ENCODE measurements at regions of chr15 and their contacts with region 1.

Region 1: DNA sequence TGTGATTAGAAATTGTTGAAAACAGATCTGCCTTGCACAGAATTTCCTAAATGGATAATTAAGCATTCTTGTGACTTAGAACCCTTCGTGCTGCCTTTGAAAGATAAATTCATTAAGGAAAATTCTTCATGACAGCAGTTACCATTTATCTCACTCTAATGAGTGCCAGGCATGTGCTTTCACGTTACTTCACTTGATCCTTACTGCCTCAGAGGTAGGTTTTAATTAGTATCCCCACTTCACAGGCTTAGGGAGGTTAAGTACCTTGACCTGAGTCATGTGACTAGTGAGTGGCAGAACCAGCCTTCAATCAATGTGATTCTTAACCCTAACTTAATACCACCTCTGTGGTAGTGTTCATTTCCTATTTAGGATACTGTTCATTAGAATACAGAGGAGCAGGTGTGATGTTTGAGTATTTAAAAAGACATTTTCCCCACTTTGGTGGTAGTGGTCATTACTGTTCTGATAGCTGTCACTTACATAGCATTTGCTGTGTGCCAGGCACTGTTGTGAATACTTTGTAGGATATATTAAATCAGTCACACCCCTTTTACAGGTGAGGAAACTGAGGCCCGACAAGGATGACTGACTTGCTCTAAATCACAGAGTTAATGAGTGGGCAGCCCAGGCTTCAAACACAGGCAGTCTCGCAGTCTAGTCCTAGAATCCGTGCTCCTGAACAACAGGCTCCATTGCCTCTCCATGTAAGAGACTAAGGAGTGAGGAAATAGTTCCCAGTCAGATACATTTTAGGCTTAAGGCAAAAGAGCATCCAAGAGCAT is 57.9 kb downstream of the RLBP1 start:
- DNase-seq: no peak
- H3K4me3 ChIP-seq: no peak overlapping the region
- H3K27ac ChIP-seq: no peak overlapping the region
- H3K4me1 ChIP-seq: peaks cover 17 to 22% (median 20%) of the 10 kb centered on the region in 4 experiments
- H3K27me3 ChIP-seq: no peaks in the 10 kb centered on the region

Region 2: DNA sequence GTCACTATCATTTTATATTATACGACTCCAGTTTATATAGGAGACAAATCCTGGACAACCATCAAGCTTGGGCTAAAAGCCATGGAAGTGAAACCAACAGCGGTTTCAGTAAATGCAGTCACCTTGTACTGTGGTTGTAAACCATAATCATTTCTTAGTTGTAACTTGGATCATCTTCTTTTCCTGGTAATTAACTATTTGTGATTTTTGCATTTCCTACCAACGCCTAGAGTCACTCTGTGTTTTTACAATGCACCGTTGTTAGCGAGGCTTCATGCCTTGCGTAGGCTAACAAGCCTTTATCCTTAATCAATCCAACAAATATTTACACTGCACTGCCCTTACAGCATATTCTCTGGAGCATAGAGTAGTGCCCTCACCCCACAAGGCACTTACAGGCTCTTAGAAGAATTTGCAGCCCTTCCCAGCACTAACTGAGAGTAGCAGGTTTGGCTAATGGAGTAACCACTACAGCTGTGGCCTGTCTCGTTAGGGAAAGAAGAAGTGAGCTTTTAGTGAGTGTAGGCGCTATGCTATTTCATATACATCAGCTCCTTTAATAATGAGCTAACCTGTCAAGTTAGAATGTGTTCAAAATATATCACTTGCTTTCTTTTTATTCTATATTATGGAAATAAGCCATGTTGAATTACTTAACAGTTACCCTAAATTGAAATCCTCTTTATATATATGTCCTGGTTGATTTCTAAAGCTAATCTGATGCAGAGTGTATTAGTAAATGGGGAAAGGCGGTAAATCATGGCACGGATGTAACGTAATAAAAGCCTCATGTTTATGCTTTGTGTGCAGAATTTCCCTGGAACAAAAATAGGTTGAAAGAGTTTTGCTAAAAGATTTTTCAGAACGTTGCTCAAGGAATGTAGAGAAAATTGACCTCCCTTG is 12.4 kb before region 1 on chr15:
- CTCF ChIA-PET with region 1: interaction called, 13 read pairs
- POLR2A ChIA-PET with region 1: no interaction called
- DNase-seq: peak in 2 of 3 donors; percentile 48 to 53
- H3K4me3 ChIP-seq: no peak overlapping the region
- H3K27ac ChIP-seq: no peak overlapping the region
- H3K4me1 ChIP-seq: peaks cover 0 to 18% (median 4%) of the 10 kb centered on the region in 4 experiments
- H3K27me3 ChIP-seq: no peaks in the 10 kb centered on the region

Region 3: DNA sequence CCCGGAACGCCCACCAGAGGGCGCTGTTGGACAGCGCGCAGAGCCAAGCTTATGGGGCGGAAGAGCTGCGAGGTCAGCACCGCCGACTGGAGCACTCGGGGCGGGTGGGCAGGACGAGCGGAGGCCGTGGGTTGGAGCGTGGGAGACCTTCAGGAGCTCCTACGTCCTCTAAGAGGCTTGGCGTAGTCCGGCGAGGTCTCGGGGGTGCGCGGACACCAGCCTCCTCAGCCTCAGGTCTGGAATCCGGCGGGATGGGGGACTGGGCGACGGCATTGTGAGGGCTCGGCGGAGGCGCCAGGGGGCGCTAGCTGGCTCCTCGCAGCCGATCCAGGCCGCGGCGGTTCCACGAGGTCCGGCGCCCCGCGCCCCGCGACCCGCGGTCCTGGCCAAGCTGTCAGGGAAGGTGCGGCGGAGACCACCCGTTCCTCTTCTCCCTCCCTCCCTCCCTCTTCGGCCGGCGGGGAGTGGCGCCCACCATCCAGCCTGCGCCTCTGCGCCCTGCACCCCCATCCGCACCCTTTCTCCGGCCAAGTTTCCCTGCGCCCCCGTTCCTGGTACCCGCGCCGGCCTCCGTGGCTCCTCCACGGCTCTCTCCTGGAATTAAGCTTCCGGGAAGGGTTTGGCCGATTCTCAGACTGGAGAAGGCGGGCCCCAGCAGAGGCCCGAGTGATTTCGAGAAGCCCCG is 195.4 kb after region 1 on chr15:
- CTCF ChIA-PET with region 1: no interaction called
- POLR2A ChIA-PET with region 1: no interaction called
- DNase-seq: peak; percentile 77 to 87 (median 85)
- H3K4me3 ChIP-seq: peak overlapping the region in 6 of 7 experiments; percentile 38 to 77 (median 62)
- H3K27ac ChIP-seq: no peak overlapping the region
- H3K4me1 ChIP-seq: peaks cover 0 to 34% (median 18%) of the 10 kb centered on the region in 4 experiments
- H3K27me3 ChIP-seq: peaks cover 0 to 97% (median 55%) of the 10 kb centered on the region in 5 experiments